ENCODE measurements at regions of chr12 and their contacts with region 1.

Region 1: GRCh38 chr12:96015672-96016071 is 19.5 kb upstream of the HAL start:
- DNase-seq: no peak
- H3K4me3 ChIP-seq: no peak overlapping the region
- H3K27ac ChIP-seq: no peak overlapping the region
- H3K27me3 ChIP-seq: no peaks in the 10 kb centered on the region
- CTCF ChIP-seq: peak; percentile 56

Region 2: DNA sequence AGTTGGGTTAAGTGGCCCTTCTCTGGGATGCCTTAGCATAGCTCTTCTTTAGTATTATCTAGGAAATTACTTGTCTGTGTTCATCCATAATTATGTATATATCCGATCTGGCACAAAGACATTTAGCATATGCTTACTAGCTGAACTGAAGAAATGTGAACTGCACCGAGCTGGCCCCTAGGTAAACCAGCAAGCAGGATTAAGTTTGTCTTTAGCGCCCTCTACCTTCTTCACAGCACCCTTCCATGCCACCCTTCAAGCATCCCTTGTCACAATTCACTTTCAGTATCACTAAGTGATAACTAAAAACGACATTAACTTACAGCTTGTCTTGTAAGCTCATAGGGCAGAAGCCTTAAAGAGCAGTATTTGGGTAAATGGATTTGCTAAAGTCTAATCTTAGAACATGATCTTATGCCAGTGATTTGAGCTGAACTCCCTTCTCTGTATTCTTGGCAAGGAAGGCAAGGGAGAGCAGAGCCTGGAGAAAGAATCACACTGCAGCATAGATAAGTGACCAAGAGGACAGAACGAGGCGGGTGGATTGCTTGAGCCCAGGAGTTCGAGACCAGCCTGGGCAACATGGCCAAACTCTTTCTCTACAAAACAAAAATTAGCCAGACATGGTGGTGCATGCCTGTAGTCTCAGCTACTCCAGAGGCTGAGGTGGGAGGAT is 16.9 kb before region 1 on chr12:
- CTCF ChIA-PET with region 1: interaction called, 18 read pairs
- POLR2A ChIA-PET with region 1: no interaction called
- DNase-seq: peak; percentile 10
- H3K4me3 ChIP-seq: no peak overlapping the region
- H3K27ac ChIP-seq: no peak overlapping the region
- H3K27me3 ChIP-seq: peaks cover 2% of the 10 kb centered on the region
- CTCF ChIP-seq: peak; percentile 65

Region 3: GRCh38 chr12:96194971-96195844 is 179.5 kb after region 1 on chr12:
- CTCF ChIA-PET with region 1: no interaction called
- POLR2A ChIA-PET with region 1: no interaction called
- DNase-seq: peak; percentile 61
- H3K4me3 ChIP-seq: peak overlapping the region; percentile 97
- H3K27ac ChIP-seq: peak overlapping the region; percentile 87
- H3K27me3 ChIP-seq: no peaks in the 10 kb centered on the region
- CTCF ChIP-seq: no peak

Measured in AG04450 (cell line).